Mammary epithelial cell (primary cell): ENCODE measurements at regions of chrX and their contacts with region 1.

Region 1: DNA sequence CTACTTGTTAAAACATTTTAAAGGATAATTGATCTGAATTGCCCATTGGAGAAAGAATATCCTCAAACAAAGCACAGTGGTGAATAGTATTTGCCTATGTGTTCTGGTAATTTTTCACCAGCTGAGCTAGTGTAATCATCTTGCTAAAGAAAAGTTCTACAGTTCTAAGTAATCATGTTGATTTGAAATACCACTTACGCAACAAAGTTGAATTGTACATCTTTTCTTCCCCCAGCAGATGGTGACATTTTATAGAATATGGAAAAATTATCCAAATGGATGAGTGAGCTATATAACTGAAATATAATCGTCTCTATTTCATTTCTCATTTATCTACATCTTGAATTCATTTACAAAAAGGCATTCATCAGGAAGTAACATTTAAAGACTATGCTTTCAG is 9.7 kb upstream of the ZNF674 start:
- DNase-seq: no peak
- H3K4me3 ChIP-seq: no peak overlapping the region
- H3K27ac ChIP-seq: no peak overlapping the region
- H3K4me1 ChIP-seq: no peaks in the 10 kb centered on the region
- H3K27me3 ChIP-seq: no peaks in the 10 kb centered on the region
- CTCF ChIP-seq: peak; percentile 23 to 46

Region 2: DNA sequence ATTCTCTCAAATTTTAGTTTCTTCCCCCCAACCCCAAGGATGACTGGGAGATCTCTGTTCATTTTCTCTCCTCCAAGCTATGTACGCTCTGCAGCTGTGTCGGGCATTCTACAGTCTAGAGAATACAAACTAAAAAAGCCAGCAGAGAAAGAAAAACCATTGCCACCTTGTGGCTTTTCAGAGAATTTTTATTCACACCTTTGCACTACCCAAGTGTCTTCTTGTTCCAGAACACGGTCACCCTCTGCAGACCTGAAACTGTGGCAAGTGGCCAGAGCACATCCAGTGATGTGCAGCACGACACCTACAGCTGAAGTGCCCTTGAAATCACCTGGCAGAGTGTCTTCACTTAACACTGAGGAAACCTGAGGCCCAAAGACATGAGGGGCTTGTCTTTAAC is 87.2 kb after region 1 on chrX:
- CTCF ChIA-PET with region 1: no interaction called
- dilution Hi-C with region 1: no loop called
- in situ Hi-C with region 1: no loop called
- intact Hi-C with region 1: loop called (anchors 1 kb)
- DNase-seq: peak; percentile 12
- H3K4me3 ChIP-seq: no peak overlapping the region
- H3K27ac ChIP-seq: no peak overlapping the region
- H3K4me1 ChIP-seq: no peaks in the 10 kb centered on the region
- H3K27me3 ChIP-seq: no peaks in the 10 kb centered on the region
- CTCF ChIP-seq: peak; percentile 28 to 44

Region 3: DNA sequence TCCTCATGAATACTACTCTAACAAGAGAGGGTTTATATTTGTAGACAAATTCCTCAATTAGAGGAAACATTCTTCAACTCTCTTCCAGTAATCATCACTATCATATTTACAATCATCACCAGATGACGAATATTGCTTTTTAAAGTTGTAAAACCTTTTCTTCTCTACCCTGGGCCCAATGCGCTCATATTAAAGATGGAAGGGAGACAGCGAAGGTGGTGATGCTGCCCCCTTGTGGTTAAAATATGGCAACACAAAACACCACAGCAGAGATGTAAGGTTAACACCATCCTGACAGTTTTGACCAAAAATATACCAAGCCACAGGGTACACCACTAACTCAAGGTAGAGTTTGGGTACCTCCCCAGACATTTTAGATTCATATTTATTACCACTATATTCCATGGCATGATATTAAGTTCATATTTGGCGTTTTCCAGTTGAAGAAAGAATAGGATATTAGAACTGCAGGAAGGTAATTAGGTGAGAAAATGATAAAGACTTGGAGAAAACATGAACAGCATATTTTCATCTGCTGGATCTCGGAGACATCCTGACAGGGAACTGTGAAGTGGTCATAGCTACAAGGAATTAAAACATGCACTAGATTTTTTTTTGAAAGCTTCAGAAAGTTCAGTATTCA is 131.2 kb after region 1 on chrX:
- CTCF ChIA-PET with region 1: no interaction called
- dilution Hi-C with region 1: no loop called
- in situ Hi-C with region 1: no loop called
- intact Hi-C with region 1: loop called (anchors 1 kb)
- DNase-seq: peak; percentile 24
- H3K4me3 ChIP-seq: no peak overlapping the region
- H3K27ac ChIP-seq: no peak overlapping the region
- H3K4me1 ChIP-seq: peaks cover 10% of the 10 kb centered on the region
- H3K27me3 ChIP-seq: peaks cover 3% of the 10 kb centered on the region
- CTCF ChIP-seq: peak; percentile 73 to 74

Region 4: DNA sequence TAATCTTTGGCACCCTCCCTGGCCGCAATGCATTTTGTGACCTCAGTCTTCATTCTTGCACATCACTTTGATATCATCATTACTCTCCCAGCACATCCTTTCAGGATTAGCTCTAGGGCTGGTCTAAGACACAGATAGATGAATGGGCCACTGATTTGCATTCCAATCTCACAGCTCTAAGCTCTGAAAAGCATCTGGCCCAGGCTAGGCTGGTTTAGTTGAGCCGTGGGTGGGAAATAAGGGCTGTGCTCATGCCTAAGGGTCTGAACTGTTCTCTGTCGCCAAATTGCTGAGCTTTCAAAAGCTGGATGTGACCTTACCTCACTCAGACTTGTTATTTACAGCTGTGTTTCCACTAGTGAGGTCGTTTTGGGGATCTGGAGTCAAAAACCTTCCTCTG is 234.0 kb after region 1 on chrX:
- CTCF ChIA-PET with region 1: interaction called, 16 read pairs
- dilution Hi-C with region 1: no loop called
- in situ Hi-C with region 1: no loop called
- intact Hi-C with region 1: no loop called
- DNase-seq: no peak
- H3K4me3 ChIP-seq: no peak overlapping the region
- H3K27ac ChIP-seq: no peak overlapping the region
- H3K4me1 ChIP-seq: peaks cover 18% of the 10 kb centered on the region
- H3K27me3 ChIP-seq: peaks cover 2% of the 10 kb centered on the region
- CTCF ChIP-seq: no peak